ENCODE measurements at regions of chr1 and their contacts with region 1.

Region 1: DNA sequence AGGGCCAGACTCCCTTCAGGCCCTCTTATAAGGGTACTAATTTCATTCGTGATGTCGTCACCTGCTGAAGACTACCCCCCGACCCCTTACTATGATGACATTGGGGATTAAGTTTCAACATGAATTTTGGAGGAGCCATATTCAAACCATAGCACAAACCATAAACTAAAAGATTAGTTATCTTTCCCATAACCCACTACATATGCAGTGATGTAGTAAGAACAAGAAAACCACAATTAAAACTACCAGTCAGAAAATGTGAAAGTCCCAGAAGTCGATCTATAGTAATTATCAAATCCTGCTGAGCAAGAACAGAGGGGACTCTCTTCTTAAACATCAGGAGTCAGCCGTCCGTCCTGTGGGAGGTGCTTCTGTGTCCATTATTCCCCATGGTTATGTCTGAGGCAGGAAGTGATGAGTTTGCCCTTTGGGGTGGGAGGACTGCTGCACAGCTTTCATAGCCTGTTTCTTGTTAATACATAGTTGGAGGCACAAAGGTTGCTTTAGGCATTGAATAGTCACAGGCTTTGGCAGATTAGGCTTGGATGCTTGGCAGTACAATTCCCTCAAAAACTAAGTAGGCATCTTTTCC is 35.9 kb upstream of the PTGFRN start:
- DNase-seq: peak; percentile 62
- H3K4me3 Mint-ChIP-seq: no peak overlapping the region
- H3K27ac Mint-ChIP-seq: peak overlapping the region; percentile 35
- H3K4me1 Mint-ChIP-seq: peaks cover 20% of the 10 kb centered on the region
- H3K27me3 Mint-ChIP-seq: no peaks in the 10 kb centered on the region

Region 2: GRCh38 chr1:116847688-116848531 is 25.9 kb before region 1 on chr1:
- CTCF ChIA-PET with region 1: no interaction called
- POLR2A ChIA-PET with region 1: no interaction called
- intact Hi-C with region 1: loop called (anchors 1 kb)
- DNase-seq: peak; percentile 61
- H3K4me3 Mint-ChIP-seq: no peak overlapping the region
- H3K27ac Mint-ChIP-seq: peak overlapping the region; percentile 34
- H3K4me1 Mint-ChIP-seq: peaks cover 27% of the 10 kb centered on the region
- H3K27me3 Mint-ChIP-seq: no peaks in the 10 kb centered on the region

Region 3: DNA sequence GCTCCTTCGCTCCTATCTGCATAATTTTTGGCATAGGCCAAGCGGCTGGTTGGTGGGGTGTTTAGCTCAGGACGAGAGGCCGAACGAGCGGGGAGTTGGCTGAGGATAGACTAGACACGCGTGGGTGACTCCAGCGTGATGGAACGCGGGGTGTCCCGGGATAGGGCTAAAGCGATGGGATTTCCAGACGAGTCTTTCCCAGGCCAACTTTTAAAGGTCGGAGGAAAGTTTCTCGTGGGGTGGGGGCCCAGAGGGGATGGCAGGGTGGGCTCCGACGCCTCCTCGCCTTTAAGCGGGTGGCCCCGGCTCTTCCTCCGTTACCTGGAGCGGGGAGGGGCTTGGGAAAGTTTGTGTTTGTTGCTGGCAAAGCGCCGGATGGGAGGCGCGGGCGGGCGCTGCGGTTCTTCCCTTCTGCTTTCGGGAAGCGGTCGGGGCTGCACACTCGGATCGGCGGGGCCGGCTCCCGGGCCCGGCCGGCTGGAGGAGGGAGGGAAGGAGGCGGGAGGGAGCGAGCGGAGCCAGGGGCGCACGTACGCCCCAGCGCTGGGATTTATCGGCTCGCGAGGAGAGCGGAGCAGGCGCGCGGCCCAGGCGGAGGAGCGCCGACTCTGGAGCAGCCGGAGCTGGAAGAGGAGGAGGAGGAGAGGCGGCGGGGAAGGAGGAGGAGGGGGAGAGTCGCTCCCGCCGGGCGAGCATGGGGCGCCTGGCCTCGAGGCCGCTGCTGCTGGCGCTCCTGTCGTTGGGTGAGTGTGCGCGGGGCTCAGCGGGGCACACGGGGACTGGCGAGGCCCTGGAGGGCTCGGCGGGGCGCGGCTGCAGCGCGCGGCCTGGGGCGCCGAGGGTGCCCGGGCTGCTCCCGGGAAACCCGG is 36.0 kb after region 1 on chr1 and contains the start of gene PTGFRN:
- CTCF ChIA-PET with region 1: interaction called, 4 read pairs
- POLR2A ChIA-PET with region 1: no interaction called
- intact Hi-C with region 1: loop called (anchors 5 kb)
- DNase-seq: peak; percentile 36
- H3K4me3 Mint-ChIP-seq: peak within 1 kb of the TSS; percentile 69
- H3K27ac Mint-ChIP-seq: no peak within 1 kb of the TSS
- H3K4me1 Mint-ChIP-seq: peaks cover 3% of the 10 kb centered on the region
- H3K27me3 Mint-ChIP-seq: no peaks in the 10 kb centered on the region
- total RNA-seq, gene PTGFRN: 13.5 to 14.2 TPM